Activated CD4-positive, alpha-beta memory T cell treated with anti-CD3 and anti-CD28 coated beads for 36 hours (primary cell): ENCODE measurements at regions of chr12 and their contacts with region 1.

Region 1: GRCh38 chr12:12837025-12837872 is 24.1 kb downstream of the DDX47 start:
- DNase-seq: peak; percentile 79
- H3K4me3 Mint-ChIP-seq: no peak overlapping the region
- H3K27ac Mint-ChIP-seq: peak overlapping the region; percentile 42
- H3K4me1 Mint-ChIP-seq: peaks cover 48% of the 10 kb centered on the region
- H3K27me3 Mint-ChIP-seq: no peaks in the 10 kb centered on the region

Region 2: GRCh38 chr12:12813120-12814101 is 23.8 kb before region 1 on chr12 and contains the start of gene DDX47:
- CTCF ChIA-PET with region 1: interaction called, 19 read pairs
- POLR2A ChIA-PET with region 1: interaction called, 3 read pairs
- intact Hi-C with region 1: no loop called
- DNase-seq: peak; percentile 98
- H3K4me3 Mint-ChIP-seq: peak within 1 kb of the TSS; percentile 93
- H3K27ac Mint-ChIP-seq: peak within 1 kb of the TSS; percentile 95
- H3K4me1 Mint-ChIP-seq: peaks cover 59% of the 10 kb centered on the region
- H3K27me3 Mint-ChIP-seq: no peaks in the 10 kb centered on the region
- total RNA-seq, gene DDX47: 75.2 to 75.3 TPM

Region 3: DNA sequence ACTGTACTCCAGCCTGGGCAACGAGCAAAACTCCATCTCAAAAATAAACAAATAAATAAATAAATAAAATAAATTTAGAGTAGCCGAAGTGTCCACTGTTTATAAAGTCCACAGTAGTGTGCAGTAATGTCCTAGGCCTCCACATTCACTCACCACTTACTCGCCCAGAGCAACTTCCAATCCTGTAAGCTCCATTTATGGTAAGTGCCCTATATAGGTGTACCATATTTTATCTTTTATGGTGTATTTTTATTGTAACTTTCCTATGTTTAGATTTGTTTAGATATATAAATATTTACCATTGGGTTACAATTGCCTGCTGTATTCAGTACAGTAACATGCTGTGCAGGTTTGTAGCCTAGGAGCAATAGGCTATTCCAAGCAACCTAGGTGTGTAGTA is 16.2 kb after region 1 on chr12:
- CTCF ChIA-PET with region 1: interaction called, 14 read pairs
- POLR2A ChIA-PET with region 1: interaction called, 3 read pairs
- intact Hi-C with region 1: no loop called
- DNase-seq: no peak
- H3K4me3 Mint-ChIP-seq: no peak overlapping the region
- H3K27ac Mint-ChIP-seq: no peak overlapping the region
- H3K4me1 Mint-ChIP-seq: no peaks in the 10 kb centered on the region
- H3K27me3 Mint-ChIP-seq: no peaks in the 10 kb centered on the region

Region 4: GRCh38 chr12:12899530-12900380 is 62.5 kb after region 1 on chr12:
- CTCF ChIA-PET with region 1: interaction called, 12 read pairs
- POLR2A ChIA-PET with region 1: no interaction called
- intact Hi-C with region 1: loop called (anchors 1 kb)
- DNase-seq: peak; percentile 86
- H3K4me3 Mint-ChIP-seq: no peak overlapping the region
- H3K27ac Mint-ChIP-seq: peak overlapping the region; percentile 77
- H3K4me1 Mint-ChIP-seq: peaks cover 19% of the 10 kb centered on the region
- H3K27me3 Mint-ChIP-seq: peaks cover 16% of the 10 kb centered on the region

Region 5: GRCh38 chr12:12983420-12984035 is 146.3 kb after region 1 on chr12:
- CTCF ChIA-PET with region 1: interaction called, 8 read pairs
- POLR2A ChIA-PET with region 1: interaction called, 3 read pairs
- intact Hi-C with region 1: loop called (anchors 2 kb)
- DNase-seq: no peak
- H3K4me3 Mint-ChIP-seq: no peak overlapping the region
- H3K27ac Mint-ChIP-seq: no peak overlapping the region
- H3K4me1 Mint-ChIP-seq: peaks cover 2% of the 10 kb centered on the region
- H3K27me3 Mint-ChIP-seq: no peaks in the 10 kb centered on the region

Region 6: GRCh38 chr12:12999959-13000615 is 162.8 kb after region 1 on chr12 and contains the start of gene HEBP1:
- CTCF ChIA-PET with region 1: interaction called, 3 read pairs
- POLR2A ChIA-PET with region 1: no interaction called
- intact Hi-C with region 1: loop called (anchors 2 kb)
- DNase-seq: peak; percentile 97
- H3K4me3 Mint-ChIP-seq: peak within 1 kb of the TSS; percentile 82
- H3K27ac Mint-ChIP-seq: peak within 1 kb of the TSS; percentile 53
- H3K4me1 Mint-ChIP-seq: peaks cover 25% of the 10 kb centered on the region
- H3K27me3 Mint-ChIP-seq: peaks cover 6% of the 10 kb centered on the region
- total RNA-seq, gene HEBP1: 20.5 to 22.4 TPM